ENCODE measurements at regions of chr4 and their contacts with region 1.

Region 1: DNA sequence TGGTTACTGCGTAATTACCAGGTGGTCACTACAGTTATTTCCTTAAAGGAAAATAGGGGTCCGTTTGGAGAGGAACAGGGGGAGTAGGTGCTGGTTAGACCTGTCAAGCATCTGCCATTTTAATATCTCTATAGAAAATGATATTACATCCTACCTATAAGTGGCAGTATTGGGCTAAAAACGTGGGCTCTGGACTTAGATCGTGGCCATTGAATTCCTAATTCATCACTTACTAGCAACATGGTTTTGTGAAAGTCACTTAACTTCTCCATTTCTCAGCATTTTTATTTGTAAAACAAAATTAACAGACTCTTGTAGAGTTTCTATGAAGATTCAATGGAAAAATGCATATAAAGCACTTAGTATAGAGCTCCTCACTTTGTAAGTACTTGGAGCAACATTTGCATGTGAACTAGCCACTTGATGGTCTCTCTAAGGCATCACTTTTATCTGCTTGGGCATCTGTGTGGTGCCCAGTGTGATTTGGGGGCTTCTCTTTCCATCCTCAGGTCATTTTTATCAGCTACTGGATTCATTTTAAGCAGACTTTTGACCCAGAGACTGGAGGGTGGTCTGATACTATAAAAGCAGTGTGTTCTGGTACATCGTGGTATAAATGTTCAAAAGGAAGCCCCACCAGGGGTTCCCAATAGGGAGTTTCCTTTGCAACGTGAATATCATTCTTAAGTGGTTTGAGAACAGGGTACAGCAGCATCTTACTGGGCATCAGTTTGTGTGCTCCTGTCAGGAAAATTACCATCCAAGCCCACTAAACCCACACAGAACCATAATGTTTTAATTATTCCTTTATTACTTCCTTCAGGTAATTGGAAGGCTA is 42.7 kb upstream of the RASSF6 start:
- DNase-seq: peak; percentile 70
- H3K4me3 Mint-ChIP-seq: no peak overlapping the region
- H3K27ac Mint-ChIP-seq: peak overlapping the region; percentile 23
- H3K4me1 Mint-ChIP-seq: peaks cover 7% of the 10 kb centered on the region
- H3K27me3 Mint-ChIP-seq: no peaks in the 10 kb centered on the region
- CTCF ChIP-seq: peak; percentile 64

Region 2: GRCh38 chr4:73676861-73677323 is 14.0 kb after region 1 on chr4:
- CTCF ChIA-PET with region 1: interaction called, 36 read pairs
- POLR2A ChIA-PET with region 1: no interaction called
- intact Hi-C with region 1: no loop called
- DNase-seq: peak; percentile 93
- H3K4me3 Mint-ChIP-seq: no peak overlapping the region
- H3K27ac Mint-ChIP-seq: peak overlapping the region; percentile 39
- H3K4me1 Mint-ChIP-seq: peaks cover 28% of the 10 kb centered on the region
- H3K27me3 Mint-ChIP-seq: no peaks in the 10 kb centered on the region
- CTCF ChIP-seq: no peak

Region 3: DNA sequence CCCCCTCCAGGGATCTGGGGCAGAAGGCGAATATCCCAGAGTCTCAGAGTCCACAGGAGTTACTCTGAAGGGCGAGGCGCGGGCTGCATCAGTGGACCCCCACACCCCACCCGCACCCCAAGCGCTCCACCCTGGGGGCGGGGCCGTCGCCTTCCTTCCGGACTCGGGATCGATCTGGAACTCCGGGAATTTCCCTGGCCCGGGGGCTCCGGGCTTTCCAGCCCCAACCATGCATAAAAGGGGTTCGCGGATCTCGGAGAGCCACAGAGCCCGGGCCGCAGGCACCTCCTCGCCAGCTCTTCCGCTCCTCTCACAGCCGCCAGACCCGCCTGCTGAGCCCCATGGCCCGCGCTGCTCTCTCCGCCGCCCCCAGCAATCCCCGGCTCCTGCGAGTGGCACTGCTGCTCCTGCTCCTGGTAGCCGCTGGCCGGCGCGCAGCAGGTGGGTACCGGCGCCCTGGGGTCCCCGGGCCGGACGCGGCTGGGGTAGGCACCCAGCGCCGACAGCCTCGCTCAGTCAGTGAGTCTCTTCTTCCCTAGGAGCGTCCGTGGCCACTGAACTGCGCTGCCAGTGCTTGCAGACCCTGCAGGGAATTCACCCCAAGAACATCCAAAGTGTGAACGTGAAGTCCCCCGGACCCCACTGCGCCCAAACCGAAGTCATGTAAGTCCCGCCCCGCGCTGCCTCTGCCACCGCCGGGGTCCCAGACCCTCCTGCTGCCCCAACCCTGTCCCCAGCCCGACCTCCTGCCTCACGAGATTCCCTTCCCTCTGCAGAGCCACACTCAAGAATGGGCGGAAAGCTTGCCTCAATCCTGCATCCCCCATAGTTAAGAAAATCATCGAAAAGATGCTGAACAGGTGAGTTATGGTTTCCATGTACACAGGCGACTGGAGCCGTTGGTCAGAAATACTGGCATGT is 206.5 kb after region 1 on chr4 and contains the start of gene CXCL1:
- CTCF ChIA-PET with region 1: interaction called, 183 read pairs
- POLR2A ChIA-PET with region 1: interaction called, 40 read pairs
- intact Hi-C with region 1: loop called (anchors 1 kb)
- DNase-seq: peak; percentile 74
- H3K4me3 Mint-ChIP-seq: peak within 1 kb of the TSS; percentile 95
- H3K27ac Mint-ChIP-seq: peak within 1 kb of the TSS; percentile 92
- H3K4me1 Mint-ChIP-seq: peaks cover 37% of the 10 kb centered on the region
- H3K27me3 Mint-ChIP-seq: no peaks in the 10 kb centered on the region
- CTCF ChIP-seq: no peak
- total RNA-seq, gene CXCL1: 35.0 and 49.3 TPM in 2 replicates

Region 4: DNA sequence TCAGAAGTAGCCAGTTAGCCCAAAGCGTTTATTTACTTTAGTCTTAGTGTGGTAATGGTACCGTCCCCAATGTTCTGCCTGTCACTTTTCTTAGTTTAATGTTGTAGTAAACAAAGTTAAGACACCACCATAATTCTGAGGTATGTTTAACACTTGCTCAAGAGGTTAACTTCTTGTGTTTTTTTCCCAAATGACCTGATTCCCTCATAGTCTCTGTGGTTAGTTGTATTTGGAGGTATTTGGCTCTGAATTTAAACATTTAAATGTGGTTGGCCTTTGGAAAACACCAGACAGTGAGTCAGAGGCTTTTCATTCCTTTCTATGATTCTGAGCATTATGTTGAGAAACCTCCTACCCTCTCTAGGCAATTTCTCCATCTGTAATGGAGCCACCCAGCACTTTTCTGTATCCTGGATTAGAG is 254.2 kb after region 1 on chr4:
- CTCF ChIA-PET with region 1: interaction called, 34 read pairs
- POLR2A ChIA-PET with region 1: interaction called, 8 read pairs
- intact Hi-C with region 1: no loop called
- DNase-seq: peak; percentile 92
- H3K4me3 Mint-ChIP-seq: no peak overlapping the region
- H3K27ac Mint-ChIP-seq: peak overlapping the region; percentile 78
- H3K4me1 Mint-ChIP-seq: peaks cover 40% of the 10 kb centered on the region
- H3K27me3 Mint-ChIP-seq: no peaks in the 10 kb centered on the region
- CTCF ChIP-seq: no peak